A673 (cell line): ENCODE measurements at regions of chr10 and their contacts with region 1.

Region 1: DNA sequence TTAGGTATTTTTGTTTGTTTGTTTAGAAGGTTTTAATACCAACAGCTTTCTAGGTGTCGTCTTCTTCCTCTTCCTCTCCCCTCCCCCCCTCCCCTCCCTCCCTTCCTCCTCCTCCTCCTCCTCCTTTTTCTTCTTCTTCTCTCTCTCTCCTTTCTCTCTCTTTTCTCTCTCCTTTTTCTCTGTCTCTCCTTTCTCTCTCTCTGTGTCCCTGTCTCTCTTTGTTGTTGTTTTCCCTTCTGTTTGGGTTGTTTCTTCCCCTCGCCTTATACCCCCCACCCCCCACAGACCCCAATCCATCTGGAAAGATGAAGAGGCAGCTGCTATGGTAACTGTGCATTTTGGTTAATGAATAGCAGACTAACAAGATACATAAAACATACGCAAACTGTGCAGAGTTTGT is 75.5 kb downstream of the BTRC start:
- DNase-seq: no peak
- H3K4me3 ChIP-seq: no peak overlapping the region
- H3K27ac ChIP-seq: no peak overlapping the region
- H3K4me1 ChIP-seq: no peaks in the 10 kb centered on the region
- H3K27me3 ChIP-seq: no peaks in the 10 kb centered on the region
- CTCF ChIP-seq: no peak

Region 2: GRCh38 chr10:101385866-101386658 is 43.4 kb before region 1 on chr10:
- CTCF ChIA-PET with region 1: no interaction called
- POLR2A ChIA-PET with region 1: interaction called, 19 read pairs
- intact Hi-C with region 1: no loop called
- DNase-seq: no peak
- H3K4me3 ChIP-seq: no peak overlapping the region
- H3K27ac ChIP-seq: no peak overlapping the region
- H3K4me1 ChIP-seq: no peaks in the 10 kb centered on the region
- H3K27me3 ChIP-seq: no peaks in the 10 kb centered on the region
- CTCF ChIP-seq: no peak

Region 3: GRCh38 chr10:101397140-101397539 is 32.3 kb before region 1 on chr10:
- CTCF ChIA-PET with region 1: no interaction called
- POLR2A ChIA-PET with region 1: interaction called, 11 read pairs
- intact Hi-C with region 1: no loop called
- DNase-seq: peak; percentile 26
- H3K4me3 ChIP-seq: no peak overlapping the region
- H3K27ac ChIP-seq: no peak overlapping the region
- H3K4me1 ChIP-seq: no peaks in the 10 kb centered on the region
- H3K27me3 ChIP-seq: no peaks in the 10 kb centered on the region
- CTCF ChIP-seq: no peak